ENCODE measurements at regions of chr1 and their contacts with region 1.

Region 1: GRCh38 chr1:98001764-98002163 is 80.9 kb upstream of the DPYD start:
- DNase-seq: no peak
- H3K4me3 ChIP-seq: no peak overlapping the region
- H3K27ac ChIP-seq: no peak overlapping the region
- H3K27me3 ChIP-seq: no peaks in the 10 kb centered on the region
- CTCF ChIP-seq: peak in 38 of 56 donors; percentile 6 to 59 (median 26)

Region 2: DNA sequence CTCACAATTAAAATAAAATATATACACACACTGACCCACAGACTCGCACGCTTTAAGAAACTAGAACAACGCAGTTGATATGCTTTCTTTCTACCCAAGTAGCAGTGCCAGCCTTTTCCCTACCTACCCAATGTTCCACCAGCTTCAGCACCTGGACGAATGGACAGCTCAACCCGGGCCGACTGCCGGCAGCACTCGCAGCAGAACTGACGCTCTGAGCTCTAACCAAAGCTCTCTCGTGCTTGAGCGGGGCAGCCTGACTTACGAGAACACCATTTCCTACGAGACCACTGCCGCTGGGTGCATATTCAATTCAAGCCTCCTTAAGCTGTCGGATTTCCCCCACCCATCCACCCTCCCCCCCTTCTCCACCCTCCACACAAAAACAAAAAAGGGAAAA is 46.5 kb after region 1 on chr1:
- intact Hi-C with region 1: loop called in 1 of 2 experiments (anchors 5 kb)
- DNase-seq: peak in 9 of 10 donors; percentile 67 to 85 (median 76)
- H3K4me3 ChIP-seq: peak overlapping the region; percentile 30 to 81 (median 60)
- H3K27ac ChIP-seq: peak overlapping the region in 53 of 59 donors; percentile 9 to 90 (median 78)
- H3K27me3 ChIP-seq: peaks cover 0 to 44% (median 7%) of the 10 kb centered on the region in 45 donors
- CTCF ChIP-seq: peak in 42 of 56 donors; percentile 8 to 55 (median 26)

Region 3: GRCh38 chr1:98068016-98068415 is 66.3 kb after region 1 on chr1:
- intact Hi-C with region 1: no loop called
- DNase-seq: no peak
- H3K4me3 ChIP-seq: no peak overlapping the region
- H3K27ac ChIP-seq: no peak overlapping the region
- H3K27me3 ChIP-seq: no peaks in the 10 kb centered on the region
- CTCF ChIP-seq: no peak

Region 4: GRCh38 chr1:98732985-98733781 is 731.4 kb after region 1 on chr1:
- intact Hi-C with region 1: no loop called
- DNase-seq: no peak
- H3K4me3 ChIP-seq: no peak overlapping the region
- H3K27ac ChIP-seq: no peak overlapping the region
- H3K27me3 ChIP-seq: no peaks in the 10 kb centered on the region
- CTCF ChIP-seq: no peak

Measured in dorsolateral prefrontal cortex (tissue), 120 donors.